HEK293 (cell line): ENCODE measurements at regions of chr19 and their contacts with region 1.

Region 1: DNA sequence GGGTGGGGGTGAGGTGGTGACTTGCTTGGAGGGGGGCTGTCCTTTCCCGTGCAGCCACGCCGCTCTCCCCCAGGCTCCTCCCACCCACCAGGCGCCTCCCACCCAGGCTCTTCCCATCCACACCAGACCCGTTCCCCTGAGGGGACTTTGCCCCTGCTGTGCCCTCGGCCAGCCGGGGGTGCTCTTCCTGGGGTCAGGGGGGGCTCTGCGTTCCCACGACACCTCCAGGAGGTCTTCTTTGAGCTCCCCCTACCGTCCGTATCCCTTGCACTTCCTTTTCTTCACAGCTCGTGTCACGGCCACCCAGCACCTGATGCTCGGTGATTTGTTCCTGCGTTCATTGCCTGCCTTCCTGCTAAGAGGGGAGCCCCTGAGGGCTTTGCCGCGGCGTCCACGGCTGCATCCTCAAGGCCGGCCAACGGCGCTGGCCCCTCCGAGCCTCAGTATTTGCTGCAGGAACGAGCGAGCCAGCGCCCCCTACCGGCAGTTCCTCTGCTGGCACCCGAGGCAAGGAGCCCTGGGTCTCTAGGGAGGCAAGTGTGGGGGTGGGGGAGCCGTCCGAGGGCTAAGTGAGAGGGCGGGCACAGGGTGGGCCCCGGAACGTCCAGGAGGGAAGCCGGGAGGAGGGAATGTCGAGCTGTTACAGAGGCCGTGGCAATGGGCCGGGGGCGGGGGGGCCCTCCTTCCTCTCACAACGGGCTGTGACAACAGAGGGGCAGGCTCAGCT is 11.8 kb downstream of the LRRC4B start:
- H3K4me3 ChIP-seq: peak overlapping the region; percentile 42
- H3K27ac ChIP-seq: peak overlapping the region; percentile 46; the same call in 1 of the 2 replicates
- H3K4me1 ChIP-seq: peaks cover 4% of the 10 kb centered on the region; the same call in 1 of the 2 replicates
- CTCF ChIP-seq: peak; percentile 98

Region 2: GRCh38 chr19:50394017-50394416 is 162.4 kb before region 1 on chr19:
- CTCF ChIA-PET with region 1: no interaction called
- POLR2A ChIA-PET with region 1: no interaction called
- H3K4me3 ChIP-seq: no peak overlapping the region
- H3K27ac ChIP-seq: no peak overlapping the region
- H3K4me1 ChIP-seq: no peaks in the 10 kb centered on the region
- CTCF ChIP-seq: no peak

Region 3: DNA sequence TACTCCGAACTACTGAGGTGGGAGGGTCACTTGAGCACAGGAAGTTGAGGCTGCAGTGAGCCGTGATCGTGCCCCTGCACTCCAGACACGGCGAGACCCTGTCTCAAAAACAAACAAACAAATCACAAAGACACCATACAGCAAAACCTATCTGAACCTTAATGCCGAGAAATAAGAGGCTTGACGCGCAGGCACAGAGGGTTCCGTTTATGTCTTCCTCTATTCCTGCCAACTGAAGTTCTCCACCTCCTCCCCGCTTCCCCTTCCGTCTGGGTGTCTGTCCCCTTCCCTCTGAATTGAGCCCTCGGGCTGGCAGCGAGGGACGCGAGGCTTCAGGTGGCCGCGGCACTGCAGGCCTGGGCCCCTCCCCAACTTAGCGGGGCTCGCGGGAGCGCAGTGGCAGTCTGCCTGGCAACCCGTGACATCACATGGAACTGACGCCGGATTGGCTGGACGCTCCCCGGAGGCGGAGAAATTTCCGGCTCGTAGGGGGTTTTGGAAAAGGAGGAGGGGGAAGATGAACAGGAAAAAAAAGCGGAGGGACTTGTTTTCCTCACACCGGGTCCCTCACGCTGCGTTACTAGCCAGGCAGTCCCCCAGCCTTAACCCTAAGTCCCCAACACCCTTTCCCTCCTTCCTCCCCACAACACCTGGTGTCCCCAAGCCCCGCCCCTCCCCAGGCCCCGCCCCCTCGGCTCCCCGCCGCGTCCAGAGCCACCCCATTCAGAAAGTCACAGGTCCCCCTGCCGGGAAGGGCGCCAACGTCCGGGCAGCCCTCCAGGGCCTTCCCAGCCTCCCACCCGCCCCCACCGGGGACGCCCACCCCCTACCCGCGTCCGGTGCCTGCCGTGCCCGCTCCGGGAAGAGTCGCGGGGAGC is 124.9 kb before region 1 on chr19:
- CTCF ChIA-PET with region 1: no interaction called
- POLR2A ChIA-PET with region 1: no interaction called
- H3K4me3 ChIP-seq: peak overlapping the region; percentile 57
- H3K27ac ChIP-seq: no peak overlapping the region; the same call in 1 of the 2 replicates
- H3K4me1 ChIP-seq: peaks cover 11% of the 10 kb centered on the region
- CTCF ChIP-seq: no peak

Region 4: DNA sequence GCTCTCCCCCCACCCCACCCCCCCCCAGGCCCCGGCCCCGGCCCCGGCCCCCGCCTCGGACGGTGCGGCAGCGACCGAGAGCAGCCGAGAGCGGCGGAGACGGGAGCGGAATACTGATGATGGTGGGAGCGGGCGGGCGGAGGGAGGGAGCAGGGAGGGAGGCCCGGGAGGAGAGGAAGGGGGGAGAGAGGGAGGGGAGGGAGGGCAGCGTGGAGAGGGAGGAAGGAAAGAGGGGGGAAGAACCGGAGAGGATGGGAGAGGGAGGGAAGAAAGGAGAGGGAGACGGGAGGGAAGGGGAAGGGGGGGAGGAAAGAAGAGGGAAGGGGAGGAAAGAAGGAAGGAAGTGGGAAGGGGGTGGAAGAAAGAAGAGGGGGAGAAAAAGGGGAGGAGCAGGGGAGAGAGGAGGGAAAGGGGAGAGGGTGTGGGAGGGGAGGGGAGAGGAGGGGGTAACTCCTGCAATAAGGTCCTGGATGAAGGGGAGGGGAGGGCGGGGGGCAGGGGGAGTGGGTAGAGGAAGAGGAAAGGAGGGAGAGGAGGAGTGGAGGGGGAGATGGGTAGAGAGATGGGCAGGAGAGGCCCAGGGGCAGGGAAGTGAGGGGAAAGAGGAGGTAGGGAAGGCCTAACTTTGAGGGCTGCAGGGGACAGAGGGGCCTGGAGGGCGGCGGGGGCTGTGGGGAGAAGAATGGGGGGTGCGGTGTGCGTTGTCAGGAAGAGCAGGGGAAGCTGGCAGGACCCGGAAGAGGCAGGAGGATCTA is 12.1 kb after region 1 on chr19 and contains the start of gene LRRC4B:
- CTCF ChIA-PET with region 1: interaction called, 34 read pairs
- POLR2A ChIA-PET with region 1: interaction called, 5 read pairs
- H3K4me3 ChIP-seq: peak within 1 kb of the TSS; percentile 40
- H3K27ac ChIP-seq: no peak within 1 kb of the TSS
- H3K4me1 ChIP-seq: no peaks in the 10 kb centered on the region
- CTCF ChIP-seq: no peak

Region 5: GRCh38 chr19:50573741-50574461 is 17.5 kb after region 1 on chr19:
- CTCF ChIA-PET with region 1: interaction called, 34 read pairs
- POLR2A ChIA-PET with region 1: interaction called, 3 read pairs
- H3K4me3 ChIP-seq: no peak overlapping the region
- H3K27ac ChIP-seq: no peak overlapping the region
- H3K4me1 ChIP-seq: no peaks in the 10 kb centered on the region
- CTCF ChIP-seq: no peak

Region 6: DNA sequence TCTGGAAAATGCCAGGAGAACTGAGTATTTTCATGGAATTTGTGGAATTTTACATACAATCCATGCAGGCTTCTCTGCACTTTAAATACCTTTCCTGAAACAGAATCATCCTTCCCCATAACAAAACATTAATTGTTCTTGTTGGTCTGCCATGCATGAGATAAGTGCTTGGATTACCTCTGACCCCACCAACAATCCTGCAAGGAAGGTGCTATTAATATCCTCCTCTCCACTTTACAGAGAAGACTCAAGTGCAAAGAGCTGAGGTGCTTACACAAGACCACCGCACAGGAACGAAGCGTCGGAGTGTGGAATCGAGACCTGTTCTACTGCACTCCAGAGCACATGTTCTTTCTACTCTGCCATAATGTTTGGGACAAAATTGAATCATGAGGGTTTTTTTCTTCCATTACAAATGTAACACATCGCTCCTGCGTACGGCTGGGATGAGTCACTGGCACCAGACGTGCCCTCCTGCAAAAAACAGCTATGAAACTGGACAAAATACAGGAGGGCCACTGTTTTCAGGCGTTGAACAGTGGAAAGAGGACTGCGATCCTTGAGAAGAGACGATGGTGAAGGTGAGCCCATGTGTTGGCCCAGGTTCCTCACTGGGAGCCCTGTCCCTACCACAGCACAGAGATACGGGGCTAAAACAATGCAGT is 24.7 kb after region 1 on chr19:
- CTCF ChIA-PET with region 1: interaction called, 18 read pairs
- POLR2A ChIA-PET with region 1: no interaction called
- H3K4me3 ChIP-seq: no peak overlapping the region
- H3K27ac ChIP-seq: no peak overlapping the region
- H3K4me1 ChIP-seq: no peaks in the 10 kb centered on the region
- CTCF ChIP-seq: no peak

Region 7: DNA sequence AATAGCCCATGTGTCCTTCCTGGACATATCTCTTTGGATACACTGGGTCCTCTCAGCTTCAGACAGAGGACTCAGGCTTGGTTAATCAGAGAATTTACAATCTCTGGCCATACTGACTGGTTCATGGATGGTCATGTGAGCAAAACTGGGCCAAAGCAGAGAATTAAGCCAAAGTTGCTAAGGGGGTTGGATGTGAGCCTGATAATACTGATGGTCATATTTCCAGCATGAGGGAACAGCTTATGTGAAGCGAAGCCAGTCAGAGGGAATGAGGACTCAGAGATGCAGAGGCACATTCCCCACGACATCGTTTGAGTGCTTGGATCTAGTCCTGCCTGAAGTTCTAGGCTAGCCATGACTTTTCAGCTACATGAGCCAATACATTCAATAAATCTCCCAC is 33.7 kb after region 1 on chr19:
- CTCF ChIA-PET with region 1: interaction called, 18 read pairs
- POLR2A ChIA-PET with region 1: no interaction called
- H3K4me3 ChIP-seq: no peak overlapping the region
- H3K27ac ChIP-seq: no peak overlapping the region
- H3K4me1 ChIP-seq: no peaks in the 10 kb centered on the region
- CTCF ChIP-seq: no peak

Region 8: GRCh38 chr19:50607874-50608785 is 51.7 kb after region 1 on chr19:
- CTCF ChIA-PET with region 1: interaction called, 16 read pairs
- POLR2A ChIA-PET with region 1: interaction called, 7 read pairs
- H3K4me3 ChIP-seq: peak overlapping the region; percentile 21
- H3K27ac ChIP-seq: no peak overlapping the region
- H3K4me1 ChIP-seq: no peaks in the 10 kb centered on the region
- CTCF ChIP-seq: peak; percentile 83

Region 9: GRCh38 chr19:50812474-50812873 is 256.0 kb after region 1 on chr19:
- CTCF ChIA-PET with region 1: no interaction called
- POLR2A ChIA-PET with region 1: no interaction called
- H3K4me3 ChIP-seq: no peak overlapping the region
- H3K27ac ChIP-seq: no peak overlapping the region
- H3K4me1 ChIP-seq: no peaks in the 10 kb centered on the region
- CTCF ChIP-seq: no peak